Heart right ventricle (tissue), 16 donors: ENCODE measurements at regions of chr3 and their contacts with region 1.

Region 1: DNA sequence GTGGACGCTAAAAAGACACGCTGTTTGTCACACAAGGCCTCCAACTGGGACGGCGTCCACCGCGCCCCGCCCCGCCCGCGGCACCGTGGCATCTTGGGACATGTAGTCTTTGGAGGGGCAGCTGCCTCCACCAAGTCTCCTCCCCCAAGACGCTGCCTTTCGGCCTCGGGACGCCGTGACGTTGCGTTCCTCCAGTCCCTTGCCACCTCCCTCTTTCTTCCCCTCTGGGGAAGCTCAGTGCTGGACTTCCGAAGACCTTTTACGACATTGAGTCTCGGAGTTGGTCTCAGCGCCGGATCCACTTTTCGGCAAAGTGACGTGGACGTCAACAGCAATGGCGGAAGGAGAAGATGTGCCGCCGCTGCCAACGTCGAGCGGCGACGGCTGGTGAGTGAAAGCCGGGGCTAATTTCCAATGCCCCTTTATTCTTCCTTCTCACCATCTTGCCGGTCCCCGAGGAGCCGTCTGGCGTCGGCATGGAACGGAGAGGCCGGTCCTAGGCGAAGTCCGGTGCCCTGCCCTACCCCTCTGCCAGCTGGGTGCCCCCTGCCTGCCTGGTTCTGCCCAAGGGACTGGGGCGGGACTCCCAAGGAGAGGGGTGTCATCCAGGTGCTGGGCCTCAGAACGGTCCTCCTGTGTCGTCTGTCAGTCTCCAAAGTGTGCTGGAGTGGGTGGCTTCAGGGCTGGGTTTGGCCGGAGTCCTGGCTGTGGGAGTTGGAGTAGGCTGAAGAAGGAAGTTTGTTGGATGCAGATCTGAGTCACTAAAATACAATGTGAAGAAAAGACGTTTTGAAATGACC is at the start of gene TBC1D23:
- DNase-seq: peak; percentile 98 to 99
- ATAC-seq: peak; percentile 99 to 100 (median 99)
- H3K4me3 ChIP-seq: peak within 1 kb of the TSS; percentile 82 to 99 (median 96)
- H3K27ac ChIP-seq: peak within 1 kb of the TSS; percentile 85 to 99 (median 94)
- H3K4me1 ChIP-seq: peaks cover 0 to 68% (median 55%) of the 10 kb centered on the region in 9 donors
- H3K27me3 ChIP-seq: no peaks in the 10 kb centered on the region
- CTCF ChIP-seq: peak in 2 of 9 donors; percentile 17 to 22
- total RNA-seq, gene TBC1D23: 23.9 to 40.4 (median 29.8) TPM

Region 2: DNA sequence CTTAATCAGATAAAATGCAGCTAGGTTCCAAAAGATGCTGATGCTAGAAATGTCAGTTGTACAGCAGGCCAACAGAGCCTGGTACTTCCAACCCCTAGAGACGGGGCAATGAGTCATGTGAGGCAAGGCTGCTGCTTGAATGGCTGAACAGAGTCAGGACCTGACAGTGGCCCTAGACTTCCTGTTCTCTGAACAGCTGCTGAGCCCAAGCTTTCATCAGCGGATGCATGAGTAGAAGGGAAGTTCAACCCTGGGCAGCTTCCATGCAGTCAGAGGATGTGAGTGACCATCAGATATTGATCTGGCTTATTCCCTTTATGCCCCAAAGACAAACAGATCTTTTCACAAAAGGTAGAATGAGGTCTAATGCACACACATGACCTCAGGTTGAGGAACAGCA is 905.4 kb before region 1 on chr3:
- intact Hi-C with region 1: no loop called
- DNase-seq: no peak
- ATAC-seq: peak in 1 of 8 donors; percentile 41
- H3K4me3 ChIP-seq: no peak overlapping the region
- H3K27ac ChIP-seq: no peak overlapping the region
- H3K4me1 ChIP-seq: no peaks in the 10 kb centered on the region
- H3K27me3 ChIP-seq: no peaks in the 10 kb centered on the region
- CTCF ChIP-seq: no peak

Region 3: GRCh38 chr3:99833617-99834205 is 427.2 kb before region 1 on chr3:
- intact Hi-C with region 1: loop called in 4 of 10 experiments (anchors 5 kb)
- DNase-seq: no peak
- ATAC-seq: no peak
- H3K4me3 ChIP-seq: no peak overlapping the region
- H3K27ac ChIP-seq: peak overlapping the region in 7 of 10 donors; percentile 5 to 62 (median 25)
- H3K4me1 ChIP-seq: peaks cover 0 to 47% (median 23%) of the 10 kb centered on the region in 9 donors
- H3K27me3 ChIP-seq: no peaks in the 10 kb centered on the region
- CTCF ChIP-seq: no peak

Region 4: DNA sequence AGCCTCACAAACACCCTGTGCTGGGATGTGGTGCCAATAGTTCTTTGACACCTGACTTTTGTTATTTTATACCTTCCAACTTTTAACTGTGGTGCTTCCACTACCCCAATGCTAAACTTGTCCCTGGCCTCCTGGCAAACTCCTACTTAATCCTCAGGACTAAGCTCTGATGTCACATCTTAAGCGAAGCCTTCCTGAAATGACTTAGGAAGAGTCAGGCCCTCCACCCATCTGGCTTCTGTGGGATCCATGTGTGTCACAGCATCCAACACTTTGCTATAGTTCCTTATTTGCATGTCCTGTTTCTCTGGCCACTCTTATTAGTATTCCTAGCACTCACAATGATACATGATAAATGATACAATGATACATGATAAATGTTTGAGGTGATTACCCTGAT is 279.7 kb before region 1 on chr3:
- intact Hi-C with region 1: no loop called
- DNase-seq: no peak
- ATAC-seq: peak in 2 of 8 donors; percentile 16 to 50
- H3K4me3 ChIP-seq: no peak overlapping the region
- H3K27ac ChIP-seq: peak overlapping the region in 2 of 10 donors; percentile 6 to 27
- H3K4me1 ChIP-seq: peaks cover 0 to 19% (median 0%) of the 10 kb centered on the region in 9 donors
- H3K27me3 ChIP-seq: no peaks in the 10 kb centered on the region
- CTCF ChIP-seq: no peak

Region 5: DNA sequence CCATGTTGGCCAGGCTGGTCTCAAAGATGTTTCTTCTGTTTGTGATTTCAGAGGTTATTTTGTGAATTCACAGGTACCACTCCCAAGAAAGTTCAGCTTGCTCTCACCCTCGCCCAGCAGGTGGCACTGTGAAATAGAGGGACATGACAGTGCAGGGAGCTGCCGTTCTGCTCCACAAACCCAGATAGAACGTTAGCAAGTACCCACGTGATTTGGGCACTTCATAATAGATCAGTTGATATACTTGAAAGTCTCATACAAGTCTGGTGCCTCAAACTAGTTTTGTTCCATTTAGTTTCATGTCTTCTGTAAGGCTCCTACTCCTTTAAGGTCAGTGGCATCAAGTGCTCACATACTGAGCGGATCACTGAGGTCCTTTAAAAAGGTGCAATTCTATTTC is 192.1 kb before region 1 on chr3:
- intact Hi-C with region 1: loop called in 1 of 10 experiments (anchors 5 kb)
- DNase-seq: peak; percentile 74 to 85
- ATAC-seq: peak; percentile 82 to 92 (median 88)
- H3K4me3 ChIP-seq: no peak overlapping the region
- H3K27ac ChIP-seq: peak overlapping the region in 5 of 10 donors; percentile 30 to 44 (median 38)
- H3K4me1 ChIP-seq: peaks cover 0 to 47% (median 19%) of the 10 kb centered on the region in 9 donors
- H3K27me3 ChIP-seq: no peaks in the 10 kb centered on the region
- CTCF ChIP-seq: peak; percentile 64 to 88 (median 78)

Region 6: GRCh38 chr3:100334488-100335351 is 73.8 kb after region 1 on chr3 and contains the start of gene NIT2:
- intact Hi-C with region 1: loop called in 1 of 10 experiments (anchors 10 kb)
- DNase-seq: peak; percentile 85 to 88
- ATAC-seq: peak; percentile 94 to 99 (median 98)
- H3K4me3 ChIP-seq: peak within 1 kb of the TSS; percentile 46 to 85 (median 69)
- H3K27ac ChIP-seq: peak within 1 kb of the TSS; percentile 46 to 94 (median 84)
- H3K4me1 ChIP-seq: peaks cover 0 to 21% (median 6%) of the 10 kb centered on the region in 9 donors
- H3K27me3 ChIP-seq: no peaks in the 10 kb centered on the region
- CTCF ChIP-seq: no peak
- total RNA-seq, gene NIT2: 39.7 to 56.7 (median 46.6) TPM

Region 7: GRCh38 chr3:100400780-100401673 is 140.1 kb after region 1 on chr3 and contains the starts of genes LNP1 and TOMM70:
- intact Hi-C with region 1: loop called in 1 of 10 experiments (anchors 5 kb)
- DNase-seq: peak; percentile 96 to 98
- ATAC-seq: peak; percentile 96 to 99 (median 98)
- H3K4me3 ChIP-seq: peak within 1 kb of the TSS; percentile 69 to 98 (median 90)
- H3K27ac ChIP-seq: peak within 1 kb of the TSS; percentile 71 to 98 (median 94)
- H3K4me1 ChIP-seq: peaks cover 0 to 66% (median 54%) of the 10 kb centered on the region in 9 donors
- H3K27me3 ChIP-seq: no peaks in the 10 kb centered on the region
- CTCF ChIP-seq: no peak
- total RNA-seq, gene LNP1: 2.2 to 5.3 (median 4.0) TPM
- total RNA-seq, gene TOMM70: 52.4 to 67.5 (median 61.0) TPM